H1 (cell line): ENCODE measurements at regions of chr16 and their contacts with region 1.

Region 1: DNA sequence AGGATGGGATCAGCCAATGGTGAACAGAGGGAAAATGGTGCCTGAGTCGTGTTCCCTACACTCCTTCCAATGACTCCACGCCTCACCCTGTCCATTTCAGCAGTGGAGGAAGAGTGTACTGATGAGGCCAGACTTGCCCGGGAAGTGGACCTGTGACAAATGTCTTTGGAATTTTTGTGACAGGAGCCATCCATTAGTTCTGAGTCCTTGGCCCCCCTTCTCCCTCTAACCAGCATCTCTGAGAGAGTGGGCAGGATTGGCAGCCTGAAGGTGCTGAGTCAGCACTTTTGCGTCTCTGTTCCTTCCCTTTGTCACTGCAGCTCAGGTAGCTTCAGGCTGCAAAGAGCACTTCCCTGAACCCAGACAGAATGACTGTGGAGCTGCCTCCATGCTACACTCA is 30.8 kb downstream of the BEAN1 start:
- DNase-seq: no peak
- H3K4me3 ChIP-seq: no peak overlapping the region
- H3K27ac ChIP-seq: no peak overlapping the region
- H3K4me1 ChIP-seq: peaks cover 0 to 4% (median 1%) of the 10 kb centered on the region in 4 experiments; a peak in 1 of 7 replicates
- H3K27me3 ChIP-seq: no peaks in the 10 kb centered on the region
- CTCF ChIP-seq: no peak
- EP300 ChIP-seq: no peak
- POLR2A ChIP-seq: no peak
- RAD21 ChIP-seq: no peak

Region 2: DNA sequence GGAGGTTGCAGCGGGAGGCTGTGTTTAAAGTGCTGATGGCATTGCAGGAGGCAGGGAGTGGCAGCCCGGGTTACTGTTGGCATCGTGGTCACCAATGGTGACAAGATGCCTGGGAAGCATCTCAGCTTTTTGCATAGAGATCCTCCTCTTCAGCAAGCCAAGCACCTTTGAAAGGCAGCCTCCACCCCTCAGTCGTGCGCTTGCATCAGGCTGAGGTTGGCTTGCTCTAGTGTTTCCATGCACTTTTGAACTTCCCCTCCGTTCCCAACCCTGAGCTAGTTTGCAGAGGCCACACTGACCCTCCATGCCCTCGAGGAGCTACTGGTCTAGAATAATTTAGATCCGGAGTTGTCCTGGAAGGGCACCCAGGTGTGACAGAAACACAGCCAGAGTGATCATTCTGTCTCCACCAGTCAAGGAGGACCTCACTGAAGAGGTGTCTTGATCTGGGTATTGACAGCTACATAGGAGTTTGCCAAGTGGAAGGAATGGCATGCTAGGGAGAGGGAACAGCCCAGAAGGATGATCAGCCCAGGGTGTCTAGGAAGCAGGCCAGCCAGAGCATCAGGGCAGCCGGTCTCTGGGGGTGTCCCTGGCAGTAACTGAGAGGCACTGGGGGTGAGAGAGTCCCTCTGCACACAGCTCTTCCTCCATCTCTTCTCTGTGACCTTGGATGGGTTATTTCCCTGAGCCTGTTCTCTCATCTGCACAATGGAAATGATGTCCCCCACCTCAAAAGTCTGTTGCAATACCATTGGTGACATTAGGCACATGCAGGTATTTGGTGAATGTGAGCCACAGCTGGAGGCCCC is 23.1 kb before region 1 on chr16:
- CTCF ChIA-PET with region 1: interaction called, 11 read pairs
- POLR2A ChIA-PET with region 1: no interaction called
- DNase-seq: no peak
- H3K4me3 ChIP-seq: no peak overlapping the region
- H3K27ac ChIP-seq: no peak overlapping the region
- H3K4me1 ChIP-seq: peaks cover 0 to 13% (median 2%) of the 10 kb centered on the region in 4 experiments; a peak in 3 of 7 replicates
- H3K27me3 ChIP-seq: peaks cover 1 to 14% (median 6%) of the 10 kb centered on the region in 4 experiments
- CTCF ChIP-seq: no peak
- EP300 ChIP-seq: no peak
- POLR2A ChIP-seq: no peak
- RAD21 ChIP-seq: no peak

Region 3: DNA sequence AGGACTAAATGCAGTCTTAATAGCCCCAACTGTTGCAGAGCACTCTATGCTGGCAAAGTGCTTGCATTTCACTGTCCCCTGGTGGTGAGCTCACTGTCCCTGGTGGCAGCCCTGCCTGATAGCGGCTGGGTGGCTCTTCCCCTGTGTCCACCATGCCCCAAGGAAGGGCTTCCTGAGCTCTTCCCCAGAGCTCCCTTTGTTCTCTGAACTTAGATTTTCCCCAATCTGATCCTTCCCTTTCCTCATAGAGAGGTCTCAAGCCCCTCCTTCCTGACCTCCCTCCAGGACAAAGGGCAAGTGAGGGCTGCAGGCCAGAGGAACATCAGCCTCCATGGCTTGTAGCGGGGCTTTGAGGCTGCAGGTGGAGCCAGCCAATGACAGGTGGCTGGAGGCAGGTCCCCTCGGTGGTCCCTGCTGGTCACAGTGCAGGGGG is 13.8 kb before region 1 on chr16:
- CTCF ChIA-PET with region 1: interaction called, 30 read pairs
- POLR2A ChIA-PET with region 1: interaction called, 4 read pairs
- DNase-seq: no peak
- H3K4me3 ChIP-seq: no peak overlapping the region
- H3K27ac ChIP-seq: no peak overlapping the region
- H3K4me1 ChIP-seq: peaks cover 0 to 4% (median 0%) of the 10 kb centered on the region in 4 experiments; a peak in 1 of 7 replicates
- H3K27me3 ChIP-seq: peaks cover 0 to 3% (median 0%) of the 10 kb centered on the region in 4 experiments; a peak in 1 of 7 replicates
- CTCF ChIP-seq: peak in 2 of 3 experiments; percentile 21 to 45; a peak in 3 of 4 replicates
- EP300 ChIP-seq: no peak
- POLR2A ChIP-seq: no peak
- RAD21 ChIP-seq: no peak; a peak in 1 of 4 replicates

Region 4: GRCh38 chr16:66490774-66491715 is 33.2 kb after region 1 on chr16:
- CTCF ChIA-PET with region 1: no interaction called
- POLR2A ChIA-PET with region 1: no interaction called
- DNase-seq: no peak
- H3K4me3 ChIP-seq: no peak overlapping the region
- H3K27ac ChIP-seq: no peak overlapping the region
- H3K4me1 ChIP-seq: no peaks in the 10 kb centered on the region; a peak in 1 of 7 replicates
- H3K27me3 ChIP-seq: no peaks in the 10 kb centered on the region; a peak in 1 of 7 replicates
- CTCF ChIP-seq: no peak
- EP300 ChIP-seq: no peak
- POLR2A ChIP-seq: no peak
- RAD21 ChIP-seq: no peak